ENCODE measurements at regions of chr6 and their contacts with region 1.

Region 1: GRCh38 chr6:29847871-29848630 is 20.4 kb downstream of the HLA-G start:
- DNase-seq: peak; percentile 55 to 86
- H3K4me3 ChIP-seq: no peak overlapping the region
- H3K4me1 ChIP-seq: no peaks in the 10 kb centered on the region
- H3K27me3 ChIP-seq: peaks cover 7% of the 10 kb centered on the region

Region 2: DNA sequence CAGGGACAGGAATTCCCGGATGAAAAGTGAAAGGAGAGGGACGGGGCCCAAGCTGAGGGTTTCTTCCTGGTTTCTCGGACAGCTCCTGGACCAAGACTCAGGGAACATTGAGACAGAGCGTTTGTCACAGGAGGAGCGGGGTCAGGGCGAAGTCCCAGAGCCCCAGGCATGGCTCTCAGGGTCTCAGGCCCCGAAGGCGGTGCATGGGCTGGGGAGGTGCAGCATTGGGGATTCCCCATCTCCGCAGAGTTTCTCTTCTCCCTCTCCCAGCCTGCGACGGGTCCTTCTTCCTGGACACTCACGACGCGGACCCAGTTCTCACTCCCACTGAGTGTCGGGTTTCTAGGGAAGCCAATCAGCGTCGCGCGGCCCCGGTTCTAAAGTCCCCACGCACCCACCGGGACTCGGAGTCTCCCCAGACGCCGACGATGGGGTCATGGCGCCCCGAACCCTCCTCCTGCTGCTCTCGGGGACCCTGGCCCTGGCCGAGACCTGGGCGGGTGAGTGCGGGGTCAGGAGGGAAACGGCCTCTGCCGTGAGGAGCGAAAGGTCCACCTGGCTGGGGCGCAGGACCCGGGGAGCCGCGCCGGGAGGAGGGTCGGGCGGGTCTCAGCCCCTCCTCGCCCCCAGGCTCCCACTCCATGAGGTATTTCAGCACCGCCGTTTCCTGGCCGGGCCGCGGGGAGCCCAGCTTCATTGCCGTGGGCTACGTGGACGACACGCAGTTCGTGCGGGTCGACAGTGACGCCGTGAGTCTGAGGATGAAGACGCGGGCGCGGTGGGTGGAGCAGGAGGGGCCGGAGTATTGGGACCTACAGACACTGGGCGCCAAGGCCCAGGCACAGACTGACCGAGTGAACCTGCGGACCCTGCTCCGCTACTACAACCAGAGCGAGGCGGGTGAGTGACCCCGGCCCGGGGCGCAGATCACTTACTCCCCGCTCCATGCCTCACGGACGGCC is 158.4 kb after region 1 on chr6:
- in situ Hi-C with region 1: loop called (anchors 5 kb)
- DNase-seq: no peak
- H3K4me3 ChIP-seq: no peak overlapping the region
- H3K4me1 ChIP-seq: no peaks in the 10 kb centered on the region
- H3K27me3 ChIP-seq: no peaks in the 10 kb centered on the region

Region 3: DNA sequence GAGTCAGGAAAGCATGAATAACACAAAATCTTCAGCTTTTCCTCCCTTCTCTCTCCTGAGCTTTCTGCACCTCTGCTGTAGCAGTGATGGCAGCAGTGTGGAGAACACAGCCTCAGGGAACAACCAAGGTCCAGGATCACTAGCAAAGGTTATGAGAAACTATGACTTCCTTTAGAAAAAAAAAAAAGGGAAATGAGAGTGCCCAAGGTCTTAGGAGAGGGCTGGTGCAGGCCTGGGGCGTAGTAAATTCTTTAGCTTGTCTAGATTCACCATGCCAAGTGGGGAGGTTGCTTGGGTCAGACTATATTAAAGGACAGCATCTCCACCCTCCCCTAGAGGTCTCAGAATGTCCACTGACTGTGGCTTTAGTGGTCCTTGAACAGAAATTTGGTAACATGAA is 172.6 kb after region 1 on chr6:
- in situ Hi-C with region 1: no loop called
- DNase-seq: no peak
- H3K4me3 ChIP-seq: no peak overlapping the region
- H3K4me1 ChIP-seq: no peaks in the 10 kb centered on the region
- H3K27me3 ChIP-seq: no peaks in the 10 kb centered on the region

Region 4: DNA sequence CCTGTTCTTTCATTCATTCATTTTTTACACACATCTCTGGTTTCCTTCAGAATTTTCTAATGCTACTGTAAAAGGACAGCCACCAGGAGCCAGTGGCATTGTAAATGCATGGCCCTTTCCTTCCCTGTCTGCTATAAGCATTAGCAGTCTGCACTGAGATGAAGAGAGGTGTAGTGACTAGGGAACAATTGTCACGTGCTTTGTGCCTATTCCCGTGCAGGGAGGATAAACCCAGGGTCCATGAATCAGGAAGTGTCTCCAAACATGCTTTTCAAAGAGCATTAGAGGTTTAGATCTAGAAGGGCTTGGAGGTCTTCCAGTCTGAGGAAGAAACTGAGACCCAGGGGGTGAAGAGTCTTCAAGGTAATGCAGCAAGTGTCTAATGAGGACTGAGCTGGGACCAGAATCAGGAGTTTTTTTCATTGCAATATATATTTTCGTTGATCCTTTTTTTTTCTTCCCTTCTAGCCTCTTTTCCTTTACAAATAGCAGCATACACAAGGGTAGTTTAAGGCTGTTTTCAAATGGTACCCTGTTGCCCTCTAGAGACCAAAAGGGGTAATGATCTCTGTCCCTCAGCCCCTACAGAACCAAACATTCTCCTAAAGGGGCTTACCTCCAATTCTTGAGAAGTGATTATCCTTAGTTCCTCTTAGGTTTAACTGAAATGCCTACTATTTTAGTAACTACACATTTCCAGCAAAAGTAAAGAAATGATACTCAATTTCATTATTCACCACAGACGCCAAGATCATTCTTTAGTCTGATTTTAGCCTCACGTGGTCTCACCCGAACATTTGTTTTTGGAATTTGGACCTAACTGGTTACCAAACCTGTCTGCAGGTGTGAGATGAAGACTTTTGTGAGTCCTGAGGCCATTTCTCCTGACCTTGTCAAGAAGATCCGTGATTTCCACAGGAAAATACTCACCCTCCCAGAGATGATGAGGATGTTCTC is 321.9 kb after region 1 on chr6:
- in situ Hi-C with region 1: loop called (anchors 10 kb)
- DNase-seq: peak; percentile 33 to 57
- H3K4me3 ChIP-seq: no peak overlapping the region
- H3K4me1 ChIP-seq: no peaks in the 10 kb centered on the region
- H3K27me3 ChIP-seq: peaks cover 6% of the 10 kb centered on the region; the same call in 1 of the 2 replicates

Region 5: DNA sequence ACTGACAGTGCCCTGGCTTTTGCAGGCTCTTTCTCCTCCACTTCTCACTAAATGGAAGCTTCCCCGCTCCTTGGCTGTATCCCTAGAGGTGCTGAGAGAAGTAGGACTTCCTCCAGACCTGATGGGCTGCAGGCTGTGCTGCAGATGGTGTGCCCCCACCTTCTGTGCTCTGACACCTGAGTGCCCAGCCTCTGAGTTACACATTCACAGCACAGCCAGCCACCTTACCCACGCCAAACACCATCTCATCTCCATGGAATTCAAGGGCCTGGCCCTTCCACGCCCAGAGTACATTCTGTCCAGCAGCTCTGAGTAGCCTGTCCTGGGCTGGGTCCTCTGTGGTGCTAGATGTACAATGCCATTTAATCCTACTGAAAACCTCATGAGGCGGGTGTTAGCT is 1078.6 kb after region 1 on chr6:
- in situ Hi-C with region 1: no loop called
- DNase-seq: no peak
- H3K4me3 ChIP-seq: no peak overlapping the region
- H3K4me1 ChIP-seq: no peaks in the 10 kb centered on the region
- H3K27me3 ChIP-seq: no peaks in the 10 kb centered on the region

Measured in HAP-1 (cell line).